HepG2 (cell line): ENCODE measurements at regions of chr7 and their contacts with region 1.

Region 1: GRCh38 chr7:5780801-5781496 is 514 bp downstream of the RNF216 start:
- DNase-seq: no peak
- ATAC-seq: peak; percentile 75
- H3K4me3 ChIP-seq: peak overlapping the region; percentile 72 to 88 (median 81)
- H3K27ac ChIP-seq: peak overlapping the region; percentile 75
- H3K4me1 ChIP-seq: peaks cover 44% of the 10 kb centered on the region
- H3K27me3 ChIP-seq: no peaks in the 10 kb centered on the region
- CTCF ChIP-seq: no peak
- EP300 ChIP-seq: no peak
- POLR2A ChIP-seq: no peak
- RAD21 ChIP-seq: no peak

Region 2: DNA sequence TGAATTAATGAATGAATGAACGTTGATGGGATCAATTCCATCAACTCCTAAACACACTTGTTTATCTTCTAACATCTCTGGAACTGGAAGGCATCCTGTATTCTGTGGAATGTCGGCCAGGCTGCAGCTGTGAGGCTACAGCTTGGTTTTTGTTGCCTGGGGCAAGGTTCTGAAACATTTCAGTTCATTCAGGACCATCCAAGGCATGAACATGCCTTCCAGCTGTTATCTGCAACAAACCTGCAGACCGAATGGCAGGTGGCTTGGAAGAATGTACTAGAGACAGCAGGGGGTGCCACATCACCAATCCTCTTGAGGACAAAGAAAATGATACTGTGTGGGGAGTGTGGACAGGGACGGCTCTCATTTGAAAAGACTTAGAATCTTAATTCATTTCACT is 931.6 kb before region 1 on chr7:
- CTCF ChIA-PET with region 1: no interaction called
- POLR2A ChIA-PET with region 1: no interaction called
- in situ Hi-C with region 1: no loop called
- intact Hi-C with region 1: loop called (anchors 10 kb)
- DNase-seq: peak; percentile 48
- ATAC-seq: peak; percentile 77
- H3K4me3 ChIP-seq: no peak overlapping the region
- H3K27ac ChIP-seq: no peak overlapping the region
- H3K4me1 ChIP-seq: no peaks in the 10 kb centered on the region
- H3K27me3 ChIP-seq: peaks cover 0 to 26% of the 10 kb centered on the region in 2 experiments; a peak in 2 of 5 replicates
- CTCF ChIP-seq: peak; percentile 76
- EP300 ChIP-seq: no peak
- POLR2A ChIP-seq: no peak
- RAD21 ChIP-seq: 0 out of 2 replicates have a peak, but pooled peaks have one; percentile 17

Region 3: DNA sequence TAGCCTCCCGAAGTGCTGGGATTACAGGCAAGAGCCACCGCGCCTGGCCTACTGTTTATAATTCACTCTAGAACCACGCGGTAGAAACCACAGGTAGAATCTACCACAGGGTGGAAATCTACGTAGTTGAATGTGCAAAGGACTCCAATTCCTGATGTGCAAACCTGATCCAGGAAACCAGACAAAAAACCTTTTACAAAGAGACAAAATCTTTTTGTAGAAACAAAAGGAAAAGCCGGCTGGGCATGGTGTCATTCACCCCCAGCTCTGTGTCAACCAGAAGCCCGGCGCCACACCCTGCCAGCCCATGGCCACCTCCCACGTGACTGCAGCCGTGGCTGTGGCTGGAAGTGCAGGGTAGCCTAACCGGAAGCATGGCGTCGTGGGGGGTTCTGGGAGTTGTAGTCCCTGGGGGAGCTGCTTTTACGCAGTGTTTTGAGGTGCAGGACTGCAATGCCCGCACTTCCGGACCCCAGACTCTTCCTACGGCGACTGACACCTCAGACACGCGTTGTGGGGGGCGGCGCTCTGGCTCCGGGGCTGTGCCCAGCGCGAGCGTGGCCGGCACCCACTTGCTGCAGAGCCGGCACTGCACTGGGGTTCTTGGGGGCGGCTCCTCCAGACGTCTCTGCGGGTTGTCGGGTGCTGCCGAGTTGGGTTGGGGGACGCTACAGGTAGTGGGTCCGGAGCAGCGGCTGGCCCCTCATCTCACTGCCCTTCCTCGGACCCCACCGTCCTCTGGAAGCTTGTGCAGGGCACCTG is 42.0 kb after region 1 on chr7:
- CTCF ChIA-PET with region 1: no interaction called
- POLR2A ChIA-PET with region 1: no interaction called
- in situ Hi-C with region 1: no loop called
- intact Hi-C with region 1: loop called (anchors 2 kb)
- DNase-seq: peak; percentile 91
- ATAC-seq: peak; percentile 100
- H3K4me3 ChIP-seq: peak overlapping the region; percentile 75 to 93 (median 78)
- H3K27ac ChIP-seq: peak overlapping the region; percentile 83
- H3K4me1 ChIP-seq: peaks cover 18% of the 10 kb centered on the region
- H3K27me3 ChIP-seq: no peaks in the 10 kb centered on the region; a peak in 1 of 5 replicates
- CTCF ChIP-seq: no peak
- EP300 ChIP-seq: no peak
- POLR2A ChIP-seq: peak; percentile 57 to 66; a peak in 3 of 4 replicates
- RAD21 ChIP-seq: no peak